Left cardiac atrium (tissue), 4 donors: ENCODE measurements at regions of chr15 and their contacts with region 1.

Region 1: DNA sequence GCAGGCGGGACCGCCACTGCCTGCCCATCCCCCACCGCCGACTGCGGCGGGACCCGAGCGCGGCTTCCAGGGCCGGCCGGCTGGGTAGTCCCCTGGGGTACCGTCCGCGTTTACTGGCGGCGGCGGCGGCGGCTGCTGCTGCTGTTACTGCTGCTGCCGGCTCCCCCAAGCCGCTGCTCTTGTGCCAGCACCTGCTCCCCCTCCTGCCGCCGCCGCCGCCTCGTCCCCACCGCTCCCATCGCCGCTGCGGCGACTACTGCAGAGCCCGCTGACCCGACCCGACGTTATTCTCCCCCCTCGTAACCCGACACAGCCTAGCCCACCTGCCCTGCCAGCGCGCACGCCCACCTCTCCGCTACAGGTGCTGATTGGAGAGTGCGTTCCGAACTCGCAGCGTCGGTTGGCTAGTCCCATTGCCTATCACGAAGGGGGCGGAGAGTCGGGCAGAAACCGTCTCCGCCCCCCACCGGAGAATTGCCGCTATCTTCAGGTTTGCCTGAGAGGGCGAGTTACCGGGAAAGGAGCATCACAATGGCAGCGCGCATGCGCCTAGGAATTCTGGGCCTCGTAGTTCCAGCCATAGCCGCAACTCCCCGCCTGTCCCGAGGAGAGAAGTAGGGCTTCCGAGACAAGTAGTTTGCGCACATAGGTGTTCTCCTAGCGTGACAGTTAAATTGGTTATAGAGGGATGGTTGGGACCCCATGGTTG is at the start of gene TTBK2:
- DNase-seq: peak; percentile 98
- ATAC-seq: peak; percentile 98 to 100
- total RNA-seq, gene TTBK2: 22.1 to 26.7 TPM

Region 2: GRCh38 chr15:42800731-42801474 is 119.8 kb before region 1 on chr15:
- intact Hi-C with region 1: loop called in 1 of 2 experiments (anchors 10 kb)
- DNase-seq: no peak
- ATAC-seq: no peak